Ascending aorta (tissue), 2 donors: ENCODE measurements at regions of chr15 and their contacts with region 1.

Region 1: DNA sequence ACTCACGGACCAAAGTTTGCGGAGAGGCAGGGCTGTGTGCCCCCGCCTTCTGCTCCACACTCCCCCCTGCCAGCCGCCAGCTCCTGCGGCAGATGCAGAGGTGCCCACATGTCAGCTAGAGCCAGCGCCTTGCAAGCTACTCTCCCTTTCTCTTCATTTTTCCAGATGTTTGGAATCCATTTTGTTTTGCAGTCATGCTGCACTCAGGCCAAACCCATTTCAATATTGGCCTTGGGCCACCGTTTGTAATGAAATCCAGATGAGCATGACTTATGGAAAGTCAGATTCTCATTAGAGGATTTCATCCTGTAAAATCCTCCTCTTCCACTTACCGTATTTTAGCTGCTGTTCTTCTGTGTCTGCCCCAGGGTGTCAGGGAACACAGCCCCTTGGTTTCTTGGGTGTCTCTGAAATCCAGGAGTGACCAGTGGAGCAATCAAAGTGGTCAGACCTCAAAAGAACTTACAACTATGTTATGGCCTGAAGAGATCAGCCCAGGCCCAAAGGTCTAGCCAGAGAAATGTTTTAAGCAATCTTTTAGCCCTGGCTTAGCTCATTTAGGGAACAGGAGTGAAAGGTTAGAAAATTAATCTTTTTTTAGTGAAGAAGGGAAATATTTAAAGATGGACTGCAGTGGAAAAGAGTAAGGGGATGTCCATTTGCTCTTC is 65.8 kb downstream of the AAGAB start:
- DNase-seq: no peak
- H3K4me3 ChIP-seq: no peak overlapping the region
- H3K27ac ChIP-seq: peak overlapping the region; percentile 92 to 95
- H3K4me1 ChIP-seq: peaks cover 30 to 47% of the 10 kb centered on the region in 2 donors
- H3K27me3 ChIP-seq: no peaks in the 10 kb centered on the region
- CTCF ChIP-seq: no peak

Region 2: GRCh38 chr15:66883322-66883911 is 305.3 kb before region 1 on chr15:
- intact Hi-C with region 1: loop called (anchors 5 kb)
- DNase-seq: peak; percentile 80 to 99
- H3K4me3 ChIP-seq: no peak overlapping the region
- H3K27ac ChIP-seq: peak overlapping the region; percentile 63 to 73
- H3K4me1 ChIP-seq: peaks cover 6 to 27% of the 10 kb centered on the region in 2 donors
- H3K27me3 ChIP-seq: no peaks in the 10 kb centered on the region
- CTCF ChIP-seq: no peak

Region 3: DNA sequence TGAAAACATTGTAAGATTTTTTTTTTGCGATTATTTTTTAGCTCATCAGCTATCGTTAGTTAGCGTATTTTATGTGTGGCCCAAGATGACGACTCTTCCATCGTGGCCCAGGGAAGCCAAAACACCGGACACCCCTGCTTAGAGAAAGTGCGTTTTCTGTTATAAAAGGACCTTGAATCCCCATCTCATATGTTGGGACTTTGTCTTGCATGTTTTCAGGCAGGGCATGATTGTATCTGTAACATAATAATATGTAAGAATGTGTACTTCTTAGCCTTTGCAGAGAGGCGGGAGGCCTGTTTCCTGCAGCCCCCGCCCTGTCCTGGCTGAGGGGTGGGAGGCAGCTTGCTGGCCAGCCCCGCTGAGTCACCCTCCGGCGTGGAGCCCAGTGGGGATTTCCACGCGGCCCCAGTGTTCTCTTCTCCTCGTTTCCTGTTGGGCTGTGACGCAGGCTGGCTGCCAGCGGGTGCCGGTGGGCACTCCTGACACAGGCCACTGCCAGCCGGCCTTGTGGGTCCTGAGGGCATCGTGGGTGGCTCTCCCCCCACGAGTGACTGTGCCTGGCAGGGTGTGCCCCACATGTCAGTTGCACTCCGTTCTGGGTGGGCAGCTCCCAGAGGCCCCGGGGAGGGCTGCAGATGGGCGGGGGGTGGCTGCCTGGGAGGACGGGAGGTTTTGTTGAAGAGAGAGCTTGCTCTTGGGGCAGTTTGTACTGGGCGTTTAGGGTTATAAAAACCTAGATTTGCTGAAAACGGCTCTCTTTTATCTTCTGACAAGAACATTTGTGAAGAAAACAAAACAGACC is 67.6 kb before region 1 on chr15:
- intact Hi-C with region 1: loop called (anchors 1 kb)
- DNase-seq: peak; percentile 93 to 96
- H3K4me3 ChIP-seq: peak overlapping the region; percentile 29 to 41
- H3K27ac ChIP-seq: peak overlapping the region; percentile 81 to 92
- H3K4me1 ChIP-seq: peaks cover 22 to 73% of the 10 kb centered on the region in 2 donors
- H3K27me3 ChIP-seq: no peaks in the 10 kb centered on the region
- CTCF ChIP-seq: no peak

Region 4: GRCh38 chr15:67144609-67145311 is 43.9 kb before region 1 on chr15:
- intact Hi-C with region 1: no loop called
- DNase-seq: no peak
- H3K4me3 ChIP-seq: no peak overlapping the region
- H3K27ac ChIP-seq: no peak overlapping the region
- H3K4me1 ChIP-seq: peaks cover 18 to 72% of the 10 kb centered on the region in 2 donors
- H3K27me3 ChIP-seq: no peaks in the 10 kb centered on the region
- CTCF ChIP-seq: no peak